WTC11 (cell line): ENCODE measurements at regions of chr5 and their contacts with region 1.

Region 1: GRCh38 chr5:77076961-77077823 is 9.9 kb downstream of the ZBED3 start:
- DNase-seq: peak; percentile 86
- ATAC-seq: peak; percentile 84
- H3K4me3 Mint-ChIP-seq: peak overlapping the region; percentile 66
- H3K27ac Mint-ChIP-seq: no peak overlapping the region
- H3K4me1 Mint-ChIP-seq: peaks cover 6% of the 10 kb centered on the region
- H3K27me3 Mint-ChIP-seq: peaks cover 12% of the 10 kb centered on the region; the same call in 1 of the 2 replicates
- CTCF ChIP-seq: peak; percentile 94

Region 2: DNA sequence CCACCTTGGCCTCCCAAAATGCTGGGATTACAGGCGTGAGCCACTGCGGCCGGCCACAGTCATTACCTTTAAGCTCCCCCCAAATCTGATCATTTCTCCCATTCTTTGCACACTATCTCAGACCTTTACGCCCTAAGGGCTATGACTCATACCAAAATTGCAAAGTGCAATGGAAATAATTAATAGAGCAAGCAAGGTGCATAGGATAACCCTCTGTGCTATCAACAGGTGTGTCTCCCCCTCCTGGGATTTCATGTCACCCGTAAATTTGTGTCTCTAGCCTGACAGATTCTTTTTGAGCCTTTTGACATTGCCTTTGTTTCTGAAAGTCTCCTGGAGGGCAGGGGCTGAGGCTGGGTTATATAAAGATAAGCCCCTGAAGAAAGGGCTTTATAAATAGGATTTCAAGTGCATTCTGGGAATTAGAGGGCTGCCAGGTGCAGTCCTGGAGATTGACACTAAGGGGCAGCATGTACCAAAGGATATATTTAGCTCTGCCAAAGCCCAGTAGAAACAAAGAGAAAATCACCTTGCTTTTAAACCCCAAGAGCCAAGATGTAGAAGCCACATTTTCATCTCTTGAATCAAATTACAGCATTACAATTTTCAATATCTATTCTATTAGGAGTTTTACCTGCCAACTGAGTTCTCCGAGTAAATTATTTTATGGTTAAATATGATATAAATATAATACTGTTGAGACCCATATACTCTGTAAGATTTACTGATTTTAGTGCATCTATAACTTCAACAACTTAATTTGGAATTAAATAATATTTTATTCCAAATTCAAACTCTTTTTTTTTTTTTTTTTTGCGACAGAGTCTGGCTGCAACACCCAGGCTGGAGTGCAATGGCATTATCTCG is 209.1 kb before region 1 on chr5:
- CTCF ChIA-PET with region 1: interaction called, 33 read pairs
- POLR2A ChIA-PET with region 1: no interaction called
- DNase-seq: peak; percentile 72
- ATAC-seq: peak; percentile 87
- H3K4me3 Mint-ChIP-seq: no peak overlapping the region
- H3K27ac Mint-ChIP-seq: no peak overlapping the region
- H3K4me1 Mint-ChIP-seq: peaks cover 18% of the 10 kb centered on the region
- H3K27me3 Mint-ChIP-seq: no peaks in the 10 kb centered on the region
- CTCF ChIP-seq: peak; percentile 76

Region 3: DNA sequence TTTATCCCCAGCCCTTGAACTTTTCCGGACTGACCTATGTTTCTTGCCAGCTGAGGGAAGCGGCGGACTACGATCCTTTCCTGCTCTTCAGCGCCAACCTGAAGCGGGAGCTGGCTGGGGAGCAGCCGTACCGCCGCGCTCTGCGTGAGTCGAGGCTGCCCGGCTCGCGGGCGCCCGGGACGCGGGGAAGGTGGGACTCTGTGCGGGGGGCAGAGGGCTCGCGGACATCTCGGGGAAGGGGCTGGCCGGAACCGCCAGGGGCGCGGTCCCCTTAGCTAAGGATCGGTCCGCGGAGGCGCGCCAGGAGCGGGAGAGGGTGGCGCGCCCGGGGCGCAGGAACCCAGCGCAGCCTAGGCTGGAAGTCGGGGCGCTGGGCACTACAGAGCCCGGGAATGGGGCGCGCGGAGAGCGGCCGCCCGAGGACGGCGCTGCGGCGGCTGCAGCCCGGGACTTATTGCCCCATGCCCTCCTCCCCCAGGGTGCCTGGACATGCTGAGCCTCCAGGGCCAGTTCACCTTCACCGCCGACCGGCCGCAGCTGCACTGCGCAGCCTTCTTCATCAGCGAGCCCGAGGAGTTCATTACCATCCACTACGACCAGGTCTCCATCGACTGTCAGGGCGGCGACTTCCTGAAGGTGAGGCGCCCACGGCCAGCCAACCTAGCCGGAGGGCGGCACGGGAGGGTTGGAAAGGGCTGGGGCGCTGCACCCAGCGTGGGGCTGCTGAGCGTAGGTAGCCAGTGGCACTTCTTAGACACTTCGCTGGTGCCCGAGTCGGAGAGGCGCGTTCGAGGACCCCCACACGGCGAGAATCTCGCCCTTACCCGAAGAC is 123.4 kb before region 1 on chr5:
- CTCF ChIA-PET with region 1: interaction called, 13 read pairs
- POLR2A ChIA-PET with region 1: no interaction called
- DNase-seq: peak; percentile 55
- ATAC-seq: peak; percentile 66
- H3K4me3 Mint-ChIP-seq: peak overlapping the region; percentile 74
- H3K27ac Mint-ChIP-seq: no peak overlapping the region
- H3K4me1 Mint-ChIP-seq: peaks cover 17% of the 10 kb centered on the region; the same call in 1 of the 2 replicates
- H3K27me3 Mint-ChIP-seq: peaks cover 59% of the 10 kb centered on the region
- CTCF ChIP-seq: no peak

Region 4: DNA sequence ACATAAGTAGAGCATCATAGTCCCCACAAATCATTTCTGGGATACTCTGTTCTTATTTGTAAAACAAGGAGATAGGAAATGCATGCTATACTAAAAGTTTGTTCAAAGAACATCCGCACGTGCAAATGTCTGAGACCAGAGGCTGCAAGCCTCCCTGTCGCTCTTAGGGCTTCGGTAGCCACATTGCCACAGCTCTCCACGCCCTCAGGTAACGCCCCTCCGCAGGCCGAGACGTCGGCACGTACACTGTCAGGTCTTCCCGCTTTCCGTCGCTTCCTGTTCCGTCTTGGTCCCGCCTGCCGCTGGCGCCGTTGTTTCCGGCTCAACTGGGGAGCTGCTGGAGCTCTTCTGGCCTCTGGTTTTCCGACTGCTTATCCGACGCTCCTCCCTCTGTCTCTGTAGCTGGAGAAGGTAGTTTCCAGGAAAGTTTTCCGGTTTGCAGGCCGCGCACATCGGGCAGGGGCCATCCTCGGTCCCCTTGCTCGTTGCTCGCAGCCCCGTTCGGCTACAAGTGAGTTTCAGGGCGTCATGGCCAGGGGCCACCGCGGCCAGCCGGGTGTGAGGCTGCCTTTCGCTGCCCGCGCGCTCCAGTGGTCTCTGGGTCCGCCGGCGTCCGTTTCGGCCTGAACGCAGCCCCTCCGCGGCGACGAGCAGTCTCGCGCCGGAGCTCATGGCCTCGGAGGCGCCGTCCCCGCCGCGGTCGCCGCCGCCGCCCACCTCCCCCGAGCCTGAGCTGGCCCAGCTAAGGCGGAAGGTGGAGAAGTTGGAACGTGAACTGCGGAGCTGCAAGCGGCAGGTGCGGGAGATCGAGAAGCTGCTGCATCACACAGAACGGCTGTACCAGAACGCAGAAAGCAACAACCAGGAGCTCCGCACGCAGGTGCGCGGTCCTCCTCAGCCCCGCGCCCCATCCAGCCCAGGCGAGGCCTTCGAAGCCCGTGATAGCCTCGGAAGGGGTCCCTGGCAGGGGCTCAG is 46.8 kb before region 1 on chr5 and contains the start of gene AGGF1:
- CTCF ChIA-PET with region 1: interaction called, 14 read pairs
- POLR2A ChIA-PET with region 1: interaction called, 3 read pairs
- DNase-seq: peak; percentile 82
- ATAC-seq: peak; percentile 98
- H3K4me3 Mint-ChIP-seq: peak within 1 kb of the TSS; percentile 90
- H3K27ac Mint-ChIP-seq: peak within 1 kb of the TSS; percentile 95
- H3K4me1 Mint-ChIP-seq: peaks cover 9% of the 10 kb centered on the region
- H3K27me3 Mint-ChIP-seq: peaks cover 45% of the 10 kb centered on the region
- CTCF ChIP-seq: no peak
- total RNA-seq, gene AGGF1: 20.2 to 23.2 TPM (median 21.2 TPM) in 3 replicates

Region 5: GRCh38 chr5:77066823-77067442 is 10.3 kb before region 1 on chr5:
- CTCF ChIA-PET with region 1: interaction called, 13 read pairs
- POLR2A ChIA-PET with region 1: interaction called, 3 read pairs
- DNase-seq: no peak
- ATAC-seq: no peak
- H3K4me3 Mint-ChIP-seq: no peak overlapping the region
- H3K27ac Mint-ChIP-seq: no peak overlapping the region
- H3K4me1 Mint-ChIP-seq: peaks cover 9% of the 10 kb centered on the region
- H3K27me3 Mint-ChIP-seq: no peaks in the 10 kb centered on the region
- CTCF ChIP-seq: no peak